Right ventricle myocardium superior (tissue), 1 donor: ENCODE measurements at regions of chr10 and their contacts with region 1.

Region 1: GRCh38 chr10:12710594-12711349 is 290.7 kb downstream of the CCDC3 start:
- DNase-seq: peak; percentile 83
- ATAC-seq: peak; percentile 84

Region 2: DNA sequence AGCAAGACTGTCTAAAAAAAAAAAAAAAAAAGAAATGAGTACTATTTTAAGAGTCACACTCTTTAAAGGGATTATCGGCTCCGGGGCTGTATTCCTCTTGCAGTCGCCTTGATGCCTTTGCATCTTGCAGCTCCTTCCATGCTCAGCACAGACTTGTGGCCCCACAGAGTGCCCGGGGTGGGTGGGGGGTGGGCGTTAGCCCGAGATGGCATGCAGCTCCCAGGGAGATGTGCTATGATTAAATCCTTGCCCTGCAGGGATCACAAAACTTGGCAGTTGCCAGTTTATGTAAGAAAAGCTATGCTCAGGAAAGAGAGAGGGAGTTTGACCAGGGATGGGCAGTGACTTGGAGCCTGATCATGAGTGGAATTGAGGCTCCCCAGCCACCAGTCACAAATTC is 208.8 kb after region 1 on chr10:
- intact Hi-C with region 1: no loop called
- DNase-seq: no peak
- ATAC-seq: no peak

Region 3: GRCh38 chr10:13099666-13100348 is 389.0 kb after region 1 on chr10 and contains the start of gene OPTN:
- intact Hi-C with region 1: loop called (anchors 10 kb)
- DNase-seq: peak; percentile 85
- ATAC-seq: peak; percentile 93
- total RNA-seq, gene OPTN: 149 TPM